Natural killer cell (primary cell): ENCODE measurements at regions of chr15 and their contacts with region 1.

Region 1: GRCh38 chr15:49046220-49047102 is at the start of gene SECISBP2L:
- DNase-seq: peak; percentile 87 to 94
- ATAC-seq: peak; percentile 96 to 97 (median 97)
- H3K4me3 ChIP-seq: peak within 1 kb of the TSS; percentile 60
- H3K4me3 Mint-ChIP-seq: peak within 1 kb of the TSS; percentile 97
- H3K27ac ChIP-seq: peak within 1 kb of the TSS; percentile 60
- H3K27ac Mint-ChIP-seq: peak within 1 kb of the TSS; percentile 86 to 95
- H3K4me1 ChIP-seq: peaks cover 8% of the 10 kb centered on the region
- H3K4me1 Mint-ChIP-seq: peaks cover 34 to 38% of the 10 kb centered on the region in 2 donors
- H3K27me3 ChIP-seq: no peaks in the 10 kb centered on the region
- H3K27me3 Mint-ChIP-seq: no peaks in the 10 kb centered on the region
- CTCF ChIP-seq: no peak
- total RNA-seq, gene SECISBP2L: 78.8 to 97.7 (median 93.7) TPM

Region 2: GRCh38 chr15:48810414-48811317 is 235.8 kb before region 1 on chr15 and contains the start of gene CEP152:
- intact Hi-C with region 1: loop called (anchors 2 kb)
- DNase-seq: peak; percentile 95 to 99
- ATAC-seq: peak; percentile 95 to 98 (median 96)
- H3K4me3 ChIP-seq: peak within 1 kb of the TSS; percentile 78
- H3K4me3 Mint-ChIP-seq: peak within 1 kb of the TSS; percentile 98
- H3K27ac ChIP-seq: peak within 1 kb of the TSS; percentile 66
- H3K27ac Mint-ChIP-seq: peak within 1 kb of the TSS; percentile 82 to 83
- H3K4me1 ChIP-seq: peaks cover 15% of the 10 kb centered on the region
- H3K4me1 Mint-ChIP-seq: peaks cover 23 to 28% of the 10 kb centered on the region in 2 donors
- H3K27me3 ChIP-seq: no peaks in the 10 kb centered on the region
- H3K27me3 Mint-ChIP-seq: peaks cover 10 to 25% of the 10 kb centered on the region in 2 donors
- CTCF ChIP-seq: no peak
- total RNA-seq, gene CEP152: 7.2 to 11.4 (median 9.2) TPM

Region 3: GRCh38 chr15:49185473-49185872 is 139.0 kb after region 1 on chr15:
- intact Hi-C with region 1: no loop called
- DNase-seq: no peak
- ATAC-seq: peak; percentile 56 to 70 (median 65)
- H3K4me3 ChIP-seq: no peak overlapping the region
- H3K4me3 Mint-ChIP-seq: no peak overlapping the region
- H3K27ac ChIP-seq: no peak overlapping the region
- H3K27ac Mint-ChIP-seq: peak overlapping the region; percentile 66 to 74
- H3K4me1 ChIP-seq: no peaks in the 10 kb centered on the region
- H3K4me1 Mint-ChIP-seq: peaks cover 54 to 55% of the 10 kb centered on the region in 2 donors
- H3K27me3 ChIP-seq: no peaks in the 10 kb centered on the region
- H3K27me3 Mint-ChIP-seq: no peaks in the 10 kb centered on the region
- CTCF ChIP-seq: no peak

Region 4: GRCh38 chr15:49331951-49332350 is 285.5 kb after region 1 on chr15:
- intact Hi-C with region 1: no loop called
- DNase-seq: no peak
- ATAC-seq: no peak
- H3K4me3 ChIP-seq: no peak overlapping the region
- H3K4me3 Mint-ChIP-seq: no peak overlapping the region
- H3K27ac ChIP-seq: no peak overlapping the region
- H3K27ac Mint-ChIP-seq: no peak overlapping the region
- H3K4me1 ChIP-seq: no peaks in the 10 kb centered on the region
- H3K4me1 Mint-ChIP-seq: no peaks in the 10 kb centered on the region
- H3K27me3 ChIP-seq: no peaks in the 10 kb centered on the region
- H3K27me3 Mint-ChIP-seq: no peaks in the 10 kb centered on the region
- CTCF ChIP-seq: no peak

Region 5: GRCh38 chr15:49620658-49621368 is 574.4 kb after region 1 on chr15 and contains the starts of genes DTWD1 and FAM227B:
- intact Hi-C with region 1: loop called (anchors 10 kb)
- DNase-seq: peak; percentile 88 to 97
- ATAC-seq: peak; percentile 96 to 100 (median 98)
- H3K4me3 ChIP-seq: peak within 1 kb of the TSS; percentile 97
- H3K4me3 Mint-ChIP-seq: peak within 1 kb of the TSS; percentile 98
- H3K27ac ChIP-seq: peak within 1 kb of the TSS; percentile 82
- H3K27ac Mint-ChIP-seq: peak within 1 kb of the TSS; percentile 96 to 97
- H3K4me1 ChIP-seq: peaks cover 6% of the 10 kb centered on the region
- H3K4me1 Mint-ChIP-seq: peaks cover 33 to 37% of the 10 kb centered on the region in 2 donors
- H3K27me3 ChIP-seq: no peaks in the 10 kb centered on the region
- H3K27me3 Mint-ChIP-seq: no peaks in the 10 kb centered on the region
- CTCF ChIP-seq: no peak
- total RNA-seq, gene DTWD1: 10.0 to 14.1 (median 12.3) TPM
- total RNA-seq, gene FAM227B: 3.8 to 5.0 (median 4.9) TPM

Region 6: DNA sequence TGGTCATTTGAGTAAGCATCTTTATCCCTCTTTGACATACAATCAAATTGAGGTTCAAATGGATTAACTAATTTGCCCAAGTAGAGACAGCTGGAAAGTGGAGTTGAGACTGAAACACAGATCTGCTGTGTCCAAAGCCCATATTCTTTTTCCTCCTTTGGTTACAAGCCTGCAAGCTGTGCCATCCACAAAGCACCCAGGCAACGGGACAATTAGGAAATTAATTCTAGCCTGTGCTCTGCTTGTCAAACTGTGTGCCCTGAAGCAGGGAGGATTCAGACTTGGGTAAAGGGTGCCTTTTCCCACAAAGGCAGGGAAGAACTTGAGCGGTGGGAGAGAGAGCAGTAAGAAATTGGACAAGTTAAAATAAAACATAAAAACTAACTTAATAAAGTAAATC is 702.3 kb after region 1 on chr15:
- intact Hi-C with region 1: no loop called
- DNase-seq: no peak
- ATAC-seq: no peak
- H3K4me3 ChIP-seq: no peak overlapping the region
- H3K4me3 Mint-ChIP-seq: no peak overlapping the region
- H3K27ac ChIP-seq: no peak overlapping the region
- H3K27ac Mint-ChIP-seq: no peak overlapping the region
- H3K4me1 ChIP-seq: no peaks in the 10 kb centered on the region
- H3K4me1 Mint-ChIP-seq: no peaks in the 10 kb centered on the region
- H3K27me3 ChIP-seq: no peaks in the 10 kb centered on the region
- H3K27me3 Mint-ChIP-seq: peaks cover 3 to 22% of the 10 kb centered on the region in 2 donors
- CTCF ChIP-seq: no peak